ENCODE measurements at regions of chr19 and their contacts with region 1.

Region 1: GRCh38 chr19:48391107-48391986 is at the start of gene KDELR1:
- DNase-seq: peak; percentile 42
- ATAC-seq: peak; percentile 67
- H3K4me3 ChIP-seq: peak within 1 kb of the TSS; percentile 93 to 99 (median 99)
- H3K27ac ChIP-seq: peak within 1 kb of the TSS; percentile 83
- H3K4me1 ChIP-seq: peaks cover 72% of the 10 kb centered on the region
- H3K27me3 ChIP-seq: peaks cover 10 to 34% of the 10 kb centered on the region in 2 experiments; a peak in 4 of 5 replicates
- CTCF ChIP-seq: peak; percentile 89
- EP300 ChIP-seq: no peak
- POLR2A ChIP-seq: peak in 1 of 2 experiments; percentile 73; a peak in 3 of 4 replicates
- RAD21 ChIP-seq: 0 out of 2 replicates have a peak, but pooled peaks have one; percentile 28
- total RNA-seq, gene KDELR1: 70.8 and 134 TPM in 2 replicates

Region 2: GRCh38 chr19:48321622-48322591 is 69.4 kb before region 1 on chr19:
- CTCF ChIA-PET with region 1: interaction called, 9 read pairs
- POLR2A ChIA-PET with region 1: interaction called, 7 read pairs
- in situ Hi-C with region 1: loop called (anchors 5 kb)
- intact Hi-C with region 1: loop called (anchors 5 kb)
- DNase-seq: peak; percentile 21
- ATAC-seq: peak; percentile 18; the same call in 2 of the 3 replicates
- H3K4me3 ChIP-seq: no peak overlapping the region
- H3K27ac ChIP-seq: no peak overlapping the region
- H3K4me1 ChIP-seq: peaks cover 63% of the 10 kb centered on the region
- H3K27me3 ChIP-seq: no peaks in the 10 kb centered on the region
- CTCF ChIP-seq: 0 out of 2 replicates have a peak, but pooled peaks have one; percentile 4
- EP300 ChIP-seq: no peak
- POLR2A ChIP-seq: no peak
- RAD21 ChIP-seq: no peak

Measured in HepG2 (cell line).